Calu3 (cell line): ENCODE measurements at regions of chr12 and their contacts with region 1.

Region 1: DNA sequence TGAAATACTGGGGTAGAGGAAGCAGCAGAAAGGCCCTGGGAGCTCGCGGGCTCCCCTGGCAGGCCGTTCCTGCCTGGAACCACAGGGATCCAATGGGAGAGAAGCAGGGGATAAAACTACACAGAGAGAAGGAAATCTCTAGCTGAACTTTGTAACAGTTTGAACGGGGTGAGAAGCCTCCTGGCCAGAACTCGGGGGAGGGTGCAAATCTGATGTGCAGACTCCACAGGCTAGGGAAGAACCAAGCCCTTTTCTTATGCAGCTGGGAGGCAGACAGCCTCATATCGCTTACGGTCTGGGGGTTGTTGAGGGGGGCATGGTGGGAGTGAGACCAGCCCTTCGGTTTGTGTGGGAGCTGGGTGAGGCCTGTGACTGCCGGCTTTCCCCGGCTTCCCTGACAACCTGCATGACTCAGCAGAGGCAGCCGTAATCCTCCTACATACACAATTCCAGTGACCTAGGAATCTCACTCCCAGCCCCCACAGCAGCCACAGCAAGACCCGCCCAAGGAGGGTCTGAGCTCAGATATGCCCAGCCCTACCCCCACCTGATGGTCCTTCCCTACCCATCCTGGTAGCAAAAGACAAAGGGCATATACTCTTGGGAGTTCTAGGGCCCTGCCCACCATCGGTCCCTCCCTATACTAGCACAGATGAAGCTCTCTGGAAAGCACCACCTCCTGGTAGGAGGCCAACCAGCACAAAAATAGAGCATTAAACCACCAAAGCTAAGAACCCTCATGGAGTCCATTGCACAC is 143.0 kb downstream of the TMTC1 start:
- DNase-seq: no peak
- H3K4me3 Mint-ChIP-seq: peak overlapping the region; percentile 16
- H3K27ac Mint-ChIP-seq: peak overlapping the region; percentile 55
- H3K4me1 Mint-ChIP-seq: peaks cover 18% of the 10 kb centered on the region
- H3K27me3 Mint-ChIP-seq: no peaks in the 10 kb centered on the region
- CTCF ChIP-seq: no peak

Region 2: GRCh38 chr12:29569132-29569757 is 71.5 kb before region 1 on chr12:
- CTCF ChIA-PET with region 1: no interaction called
- intact Hi-C with region 1: no loop called
- DNase-seq: no peak
- H3K4me3 Mint-ChIP-seq: no peak overlapping the region
- H3K27ac Mint-ChIP-seq: no peak overlapping the region
- H3K4me1 Mint-ChIP-seq: no peaks in the 10 kb centered on the region
- H3K27me3 Mint-ChIP-seq: peaks cover 42% of the 10 kb centered on the region
- CTCF ChIP-seq: no peak

Region 3: DNA sequence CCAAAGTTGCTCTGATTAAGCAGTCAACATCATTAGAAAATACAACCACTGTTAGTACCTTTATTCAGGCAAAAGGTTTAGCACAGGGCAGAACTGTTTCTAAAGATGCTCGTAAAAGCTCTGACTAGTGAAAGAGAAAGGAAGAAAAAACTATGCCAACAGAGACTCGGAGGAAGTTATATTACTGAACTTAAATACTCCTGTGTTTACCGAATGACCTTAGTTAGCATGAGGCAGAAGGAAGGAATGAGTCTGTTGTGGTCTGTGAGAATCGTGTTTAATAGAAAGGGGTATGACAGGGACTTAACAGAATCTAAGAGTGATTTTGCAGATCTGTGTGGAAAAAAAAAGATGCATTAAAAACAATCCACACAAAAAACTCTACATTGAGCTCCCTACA is 59.1 kb before region 1 on chr12:
- CTCF ChIA-PET with region 1: no interaction called
- intact Hi-C with region 1: loop called (anchors 10 kb)
- DNase-seq: no peak
- H3K4me3 Mint-ChIP-seq: no peak overlapping the region
- H3K27ac Mint-ChIP-seq: no peak overlapping the region
- H3K4me1 Mint-ChIP-seq: peaks cover 7% of the 10 kb centered on the region
- H3K27me3 Mint-ChIP-seq: no peaks in the 10 kb centered on the region
- CTCF ChIP-seq: no peak